CD4-positive, alpha-beta T cell (primary cell): ENCODE measurements at regions of chr11 and their contacts with region 1.

Region 1: GRCh38 chr11:83249972-83250593 is 36.1 kb downstream of the CCDC90B start:
- DNase-seq: peak in 4 of 14 experiments; percentile 21 to 70 (median 62)
- ATAC-seq: peak; percentile 85
- H3K4me3 ChIP-seq: no peak overlapping the region
- H3K4me3 Mint-ChIP-seq: no peak overlapping the region
- H3K27ac ChIP-seq: no peak overlapping the region
- H3K27ac Mint-ChIP-seq: no peak overlapping the region
- H3K4me1 ChIP-seq: no peaks in the 10 kb centered on the region
- H3K4me1 Mint-ChIP-seq: no peaks in the 10 kb centered on the region
- H3K27me3 ChIP-seq: no peaks in the 10 kb centered on the region
- H3K27me3 Mint-ChIP-seq: no peaks in the 10 kb centered on the region
- CTCF ChIP-seq: peak; percentile 85

Region 2: GRCh38 chr11:82718307-82718706 is 531.8 kb before region 1 on chr11:
- CTCF ChIA-PET with region 1: no interaction called
- POLR2A ChIA-PET with region 1: no interaction called
- intact Hi-C with region 1: loop called in 1 of 2 experiments (anchors 5 kb)
- DNase-seq: peak in 5 of 14 experiments; percentile 10 to 51 (median 37)
- ATAC-seq: peak; percentile 59
- H3K4me3 ChIP-seq: no peak overlapping the region
- H3K4me3 Mint-ChIP-seq: no peak overlapping the region
- H3K27ac ChIP-seq: no peak overlapping the region
- H3K27ac Mint-ChIP-seq: no peak overlapping the region
- H3K4me1 ChIP-seq: no peaks in the 10 kb centered on the region
- H3K4me1 Mint-ChIP-seq: no peaks in the 10 kb centered on the region
- H3K27me3 ChIP-seq: no peaks in the 10 kb centered on the region
- H3K27me3 Mint-ChIP-seq: peaks cover 10% of the 10 kb centered on the region
- CTCF ChIP-seq: peak; percentile 67

Region 3: DNA sequence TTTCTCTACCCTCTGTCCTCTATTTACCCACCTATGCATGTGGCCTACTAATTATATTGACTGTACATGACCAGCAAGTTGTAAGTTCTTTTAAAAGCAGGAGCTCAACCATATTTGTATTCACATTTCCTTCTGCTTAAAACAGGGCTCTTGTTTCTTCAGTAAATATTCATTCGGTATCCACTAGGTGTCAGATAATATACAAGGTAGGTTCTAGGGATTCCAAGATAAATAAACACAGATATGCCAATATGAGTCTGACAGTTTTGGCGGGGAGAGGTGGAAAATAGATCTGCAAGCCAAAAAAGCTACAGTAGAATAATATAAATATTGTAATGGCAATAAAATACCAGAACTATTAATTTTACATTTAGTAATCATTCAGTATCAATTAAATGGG is 163.0 kb before region 1 on chr11:
- CTCF ChIA-PET with region 1: interaction called, 6 read pairs
- POLR2A ChIA-PET with region 1: interaction called, 3 read pairs
- intact Hi-C with region 1: loop called (anchors 5 kb)
- DNase-seq: peak in 1 of 14 experiments; percentile 17
- ATAC-seq: peak; percentile 52
- H3K4me3 ChIP-seq: no peak overlapping the region
- H3K4me3 Mint-ChIP-seq: no peak overlapping the region
- H3K27ac ChIP-seq: no peak overlapping the region
- H3K27ac Mint-ChIP-seq: peak overlapping the region; percentile 24
- H3K4me1 ChIP-seq: no peaks in the 10 kb centered on the region
- H3K4me1 Mint-ChIP-seq: peaks cover 20% of the 10 kb centered on the region
- H3K27me3 ChIP-seq: no peaks in the 10 kb centered on the region
- H3K27me3 Mint-ChIP-seq: no peaks in the 10 kb centered on the region
- CTCF ChIP-seq: peak; percentile 30